Natural killer cell (primary cell): ENCODE measurements at regions of chr1 and their contacts with region 1.

Region 1: GRCh38 chr1:172357753-172358385 is 62.6 kb upstream of the C1orf105 start:
- DNase-seq: peak in 1 of 2 donors; percentile 40
- ATAC-seq: peak; percentile 16 to 41 (median 27)
- H3K4me3 ChIP-seq: no peak overlapping the region
- H3K4me3 Mint-ChIP-seq: peak overlapping the region; percentile 81
- H3K27ac ChIP-seq: peak overlapping the region; percentile 82
- H3K27ac Mint-ChIP-seq: peak overlapping the region; percentile 89 to 90
- H3K4me1 ChIP-seq: peaks cover 20% of the 10 kb centered on the region
- H3K4me1 Mint-ChIP-seq: peaks cover 41 to 50% of the 10 kb centered on the region in 2 donors
- H3K27me3 ChIP-seq: no peaks in the 10 kb centered on the region
- H3K27me3 Mint-ChIP-seq: no peaks in the 10 kb centered on the region
- CTCF ChIP-seq: no peak

Region 2: GRCh38 chr1:172180501-172181285 is 177.2 kb before region 1 on chr1:
- intact Hi-C with region 1: loop called (anchors 5 kb)
- DNase-seq: peak; percentile 22 to 71
- ATAC-seq: peak; percentile 67 to 79 (median 73)
- H3K4me3 ChIP-seq: peak overlapping the region; percentile 14
- H3K4me3 Mint-ChIP-seq: peak overlapping the region; percentile 89
- H3K27ac ChIP-seq: peak overlapping the region; percentile 94
- H3K27ac Mint-ChIP-seq: peak overlapping the region; percentile 97
- H3K4me1 ChIP-seq: peaks cover 14% of the 10 kb centered on the region
- H3K4me1 Mint-ChIP-seq: peaks cover 21 to 24% of the 10 kb centered on the region in 2 donors
- H3K27me3 ChIP-seq: no peaks in the 10 kb centered on the region
- H3K27me3 Mint-ChIP-seq: no peaks in the 10 kb centered on the region
- CTCF ChIP-seq: no peak

Region 3: GRCh38 chr1:172332230-172332629 is 25.6 kb before region 1 on chr1:
- intact Hi-C with region 1: no loop called
- DNase-seq: no peak
- ATAC-seq: no peak
- H3K4me3 ChIP-seq: no peak overlapping the region
- H3K4me3 Mint-ChIP-seq: no peak overlapping the region
- H3K27ac ChIP-seq: no peak overlapping the region
- H3K27ac Mint-ChIP-seq: no peak overlapping the region
- H3K4me1 ChIP-seq: peaks cover 2% of the 10 kb centered on the region
- H3K4me1 Mint-ChIP-seq: no peaks in the 10 kb centered on the region
- H3K27me3 ChIP-seq: no peaks in the 10 kb centered on the region
- H3K27me3 Mint-ChIP-seq: no peaks in the 10 kb centered on the region
- CTCF ChIP-seq: no peak

Region 4: GRCh38 chr1:172343240-172344160 is 14.4 kb before region 1 on chr1:
- intact Hi-C with region 1: loop called (anchors 2 kb)
- DNase-seq: peak in 1 of 2 donors; percentile 36
- ATAC-seq: peak; percentile 60 to 85 (median 79)
- H3K4me3 ChIP-seq: no peak overlapping the region
- H3K4me3 Mint-ChIP-seq: peak overlapping the region; percentile 70
- H3K27ac ChIP-seq: peak overlapping the region; percentile 69
- H3K27ac Mint-ChIP-seq: peak overlapping the region; percentile 85 to 88
- H3K4me1 ChIP-seq: peaks cover 8% of the 10 kb centered on the region
- H3K4me1 Mint-ChIP-seq: peaks cover 24 to 31% of the 10 kb centered on the region in 2 donors
- H3K27me3 ChIP-seq: no peaks in the 10 kb centered on the region
- H3K27me3 Mint-ChIP-seq: no peaks in the 10 kb centered on the region
- CTCF ChIP-seq: no peak

Region 5: GRCh38 chr1:172380441-172381244 is 22.8 kb after region 1 on chr1:
- intact Hi-C with region 1: loop called (anchors 1 kb)
- DNase-seq: peak in 1 of 2 donors; percentile 79
- ATAC-seq: peak; percentile 94 to 95 (median 95)
- H3K4me3 ChIP-seq: no peak overlapping the region
- H3K4me3 Mint-ChIP-seq: peak overlapping the region; percentile 72
- H3K27ac ChIP-seq: peak overlapping the region; percentile 87
- H3K27ac Mint-ChIP-seq: peak overlapping the region; percentile 90 to 91
- H3K4me1 ChIP-seq: no peaks in the 10 kb centered on the region
- H3K4me1 Mint-ChIP-seq: peaks cover 27 to 31% of the 10 kb centered on the region in 2 donors
- H3K27me3 ChIP-seq: no peaks in the 10 kb centered on the region
- H3K27me3 Mint-ChIP-seq: no peaks in the 10 kb centered on the region
- CTCF ChIP-seq: no peak